Thyroid gland (tissue), 4 donors: ENCODE measurements at regions of chr20 and their contacts with region 1.

Region 1: DNA sequence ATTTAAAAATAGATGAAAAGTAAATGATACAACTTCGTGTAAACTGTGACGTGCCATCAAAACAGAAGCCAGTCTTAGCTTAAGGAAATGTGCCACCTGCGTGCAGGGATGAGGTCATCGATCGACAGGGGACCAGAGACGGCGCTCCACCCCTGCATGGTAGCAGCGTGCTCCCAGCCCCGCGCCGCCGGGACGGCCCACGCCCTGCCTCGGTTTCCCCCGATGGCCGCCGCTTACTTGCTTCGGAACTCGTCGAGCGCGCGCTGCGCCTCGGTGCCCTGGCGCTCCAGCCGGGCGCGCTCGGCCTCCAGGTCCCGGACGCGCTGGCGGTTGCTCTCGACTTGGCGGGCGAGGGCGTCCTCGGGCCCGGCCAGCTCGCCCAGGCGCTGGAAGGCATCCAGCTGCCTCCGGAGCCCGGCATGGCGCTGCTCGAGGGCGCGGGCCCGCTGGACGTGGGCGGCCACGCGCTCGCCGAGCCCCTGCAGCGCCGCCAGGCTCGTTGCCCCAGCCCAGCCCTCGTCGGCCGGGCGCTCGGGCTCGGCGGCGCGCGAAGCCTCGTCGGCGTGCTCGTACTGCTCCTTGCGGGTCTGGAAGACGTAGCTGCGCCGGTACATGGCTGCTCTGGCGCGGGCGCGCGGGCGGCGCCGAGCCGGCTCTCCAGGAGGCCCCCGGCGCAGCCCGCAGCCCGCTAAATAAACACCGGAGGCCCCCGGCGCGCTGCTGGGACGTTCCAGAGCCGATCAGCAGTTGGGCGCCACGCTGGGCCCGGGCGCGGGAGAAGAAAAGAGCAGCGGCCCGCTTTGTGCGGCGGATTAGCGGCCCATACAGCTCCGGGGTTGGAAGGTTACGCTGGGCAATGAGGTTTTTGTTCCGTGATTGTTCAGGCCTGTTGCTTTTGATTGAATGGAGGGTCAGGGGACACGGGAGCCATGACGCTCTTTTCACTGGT is at the start of gene BFSP1:
- DNase-seq: peak; percentile 74 to 75
- H3K4me3 ChIP-seq: peak within 1 kb of the TSS; percentile 35 to 60 (median 36)
- H3K27ac ChIP-seq: peak within 1 kb of the TSS; percentile 71 to 83 (median 80)
- H3K4me1 ChIP-seq: peaks cover 4 to 7% of the 10 kb centered on the region in 2 donors
- H3K27me3 ChIP-seq: no peaks in the 10 kb centered on the region
- CTCF ChIP-seq: no peak
- POLR2A ChIP-seq: peak in 1 of 2 donors; percentile 39
- total RNA-seq, gene BFSP1: 2.7 to 8.7 (median 4.2) TPM

Region 2: GRCh38 chr20:17617551-17618223 is 86.7 kb after region 1 on chr20:
- intact Hi-C with region 1: loop called (anchors 5 kb)
- DNase-seq: peak; percentile 89 to 91
- H3K4me3 ChIP-seq: no peak overlapping the region
- H3K27ac ChIP-seq: peak overlapping the region; percentile 9 to 86 (median 75)
- H3K4me1 ChIP-seq: peaks cover 9 to 26% of the 10 kb centered on the region in 2 donors
- H3K27me3 ChIP-seq: no peaks in the 10 kb centered on the region
- CTCF ChIP-seq: peak; percentile 59 to 98 (median 93)
- POLR2A ChIP-seq: peak in 1 of 2 donors; percentile 19